ENCODE measurements at regions of chr10 and their contacts with region 1.

Region 1: GRCh38 chr10:21525367-21526183 is at the start of gene SKIDA1:
- DNase-seq: peak; percentile 89 to 95
- ATAC-seq: peak; percentile 91
- H3K4me3 ChIP-seq: peak within 1 kb of the TSS; percentile 61 to 62
- H3K27ac ChIP-seq: peak within 1 kb of the TSS; percentile 93 to 94
- H3K4me1 ChIP-seq: no peaks in the 10 kb centered on the region
- H3K27me3 ChIP-seq: no peaks in the 10 kb centered on the region
- total RNA-seq, gene SKIDA1: 1.2 to 1.4 TPM

Region 2: GRCh38 chr10:19563388-19564141 is 1962.0 kb before region 1 on chr10:
- intact Hi-C with region 1: loop called in 1 of 2 experiments (anchors 10 kb)
- DNase-seq: no peak
- ATAC-seq: peak; percentile 22
- H3K4me3 ChIP-seq: no peak overlapping the region
- H3K27ac ChIP-seq: no peak overlapping the region
- H3K4me1 ChIP-seq: peaks cover 0 to 6% of the 10 kb centered on the region in 2 donors
- H3K27me3 ChIP-seq: no peaks in the 10 kb centered on the region

Region 3: GRCh38 chr10:21464143-21464533 is 61.4 kb before region 1 on chr10:
- intact Hi-C with region 1: no loop called
- DNase-seq: no peak
- ATAC-seq: no peak
- H3K4me3 ChIP-seq: no peak overlapping the region
- H3K27ac ChIP-seq: no peak overlapping the region
- H3K4me1 ChIP-seq: no peaks in the 10 kb centered on the region
- H3K27me3 ChIP-seq: no peaks in the 10 kb centered on the region

Region 4: DNA sequence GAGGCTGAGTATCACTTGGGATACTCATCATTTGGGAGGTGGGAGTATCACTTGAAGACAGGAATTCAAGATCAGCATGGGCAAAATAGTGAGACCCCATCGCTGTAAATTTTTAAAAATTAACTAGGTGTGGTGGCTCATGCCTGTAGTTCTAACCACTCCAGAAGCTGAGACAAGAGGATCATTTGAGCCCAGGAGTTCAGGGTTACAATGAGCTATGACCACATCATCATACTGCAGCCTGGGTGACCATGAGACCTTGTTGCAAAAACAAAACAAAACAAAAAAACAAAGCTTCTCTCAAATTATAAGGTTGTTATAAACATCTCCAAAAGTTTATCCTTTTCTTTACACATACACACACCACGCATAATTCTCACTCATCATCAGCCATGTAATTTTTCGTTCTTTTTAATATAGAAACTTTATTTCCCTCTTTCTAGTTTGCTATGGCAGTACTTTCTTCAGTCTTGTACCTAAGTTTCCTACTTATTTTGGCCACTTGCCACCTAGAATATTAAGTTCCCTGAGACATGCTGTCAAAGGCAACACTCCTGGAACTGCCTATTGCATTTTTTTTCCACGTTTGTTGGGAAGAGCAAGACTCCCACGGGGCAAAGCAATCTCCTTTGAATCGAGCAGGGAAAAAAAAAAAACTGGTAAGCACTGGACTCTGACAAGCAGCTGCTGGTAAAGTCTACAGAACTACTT is 37.2 kb before region 1 on chr10:
- intact Hi-C with region 1: no loop called
- DNase-seq: no peak
- ATAC-seq: no peak
- H3K4me3 ChIP-seq: no peak overlapping the region
- H3K27ac ChIP-seq: no peak overlapping the region
- H3K4me1 ChIP-seq: no peaks in the 10 kb centered on the region
- H3K27me3 ChIP-seq: no peaks in the 10 kb centered on the region

Region 5: GRCh38 chr10:22325272-22326144 is 799.9 kb after region 1 on chr10:
- intact Hi-C with region 1: loop called in 1 of 2 experiments (anchors 10 kb)
- DNase-seq: peak; percentile 83 to 92
- ATAC-seq: peak; percentile 72
- H3K4me3 ChIP-seq: peak overlapping the region; percentile 44 to 92
- H3K27ac ChIP-seq: peak overlapping the region in 1 of 2 donors; percentile 52
- H3K4me1 ChIP-seq: peaks cover 2 to 3% of the 10 kb centered on the region in 2 donors
- H3K27me3 ChIP-seq: no peaks in the 10 kb centered on the region